Activated CD4-positive, alpha-beta T cell treated with anti-CD3 and anti-CD28 coated beads for 36 hours (primary cell): ENCODE measurements at regions of chr10 and their contacts with region 1.

Region 1: GRCh38 chr10:47311932-47312662 is 10.2 kb upstream of the GDF2 start:
- DNase-seq: peak; percentile 93
- ATAC-seq: peak; percentile 96
- H3K4me3 Mint-ChIP-seq: no peak overlapping the region
- H3K27ac Mint-ChIP-seq: peak overlapping the region; percentile 58
- H3K4me1 Mint-ChIP-seq: peaks cover 22% of the 10 kb centered on the region
- H3K27me3 Mint-ChIP-seq: no peaks in the 10 kb centered on the region

Region 2: GRCh38 chr10:47024399-47025252 is 287.5 kb before region 1 on chr10:
- CTCF ChIA-PET with region 1: interaction called, 45 read pairs
- POLR2A ChIA-PET with region 1: no interaction called
- intact Hi-C with region 1: loop called (anchors 1 kb)
- DNase-seq: peak; percentile 84
- ATAC-seq: peak; percentile 97
- H3K4me3 Mint-ChIP-seq: no peak overlapping the region
- H3K27ac Mint-ChIP-seq: no peak overlapping the region
- H3K4me1 Mint-ChIP-seq: peaks cover 5% of the 10 kb centered on the region
- H3K27me3 Mint-ChIP-seq: peaks cover 6% of the 10 kb centered on the region

Region 3: DNA sequence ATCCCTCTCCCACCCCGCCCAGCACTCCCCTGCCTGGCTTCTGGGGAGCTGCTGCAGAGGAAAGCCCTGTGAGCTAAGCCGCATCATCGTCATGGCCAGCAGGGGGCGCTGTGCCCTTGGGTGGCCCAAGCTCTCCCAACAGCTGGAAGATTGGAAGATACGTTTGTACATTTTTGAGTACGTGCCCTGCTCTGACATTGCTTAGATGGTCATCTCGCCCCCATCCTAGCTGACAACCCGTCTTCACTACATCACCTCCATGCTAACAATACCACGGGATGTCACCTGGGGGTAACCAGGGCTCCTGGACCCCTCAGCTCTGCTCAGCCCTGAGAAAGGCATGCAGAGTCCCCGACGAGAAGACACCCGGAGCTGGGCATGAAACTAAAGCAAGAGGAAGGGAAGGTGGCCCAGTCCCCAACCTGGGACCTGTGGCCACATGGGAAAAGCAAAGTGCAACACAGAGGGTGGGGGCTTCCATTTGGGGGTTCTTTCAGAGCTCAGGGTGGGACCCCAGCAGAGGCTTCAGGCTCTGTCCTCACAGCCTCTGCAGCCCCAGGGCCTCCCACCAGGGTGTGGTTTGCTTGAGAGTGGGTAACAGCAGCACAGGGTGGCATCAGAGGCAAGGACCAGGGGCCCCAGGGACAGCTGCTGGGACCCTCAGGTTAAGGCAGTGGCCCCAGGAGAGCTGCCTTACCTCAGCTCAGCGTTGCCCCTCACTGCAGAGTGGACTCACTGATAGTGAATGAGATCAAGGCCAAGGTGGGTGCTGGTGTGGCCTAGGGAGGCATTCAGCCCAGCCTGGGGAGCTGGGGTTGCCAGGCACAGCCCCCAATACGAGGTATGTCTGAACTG is 264.2 kb before region 1 on chr10:
- CTCF ChIA-PET with region 1: interaction called, 150 read pairs
- POLR2A ChIA-PET with region 1: interaction called, 7 read pairs
- intact Hi-C with region 1: loop called (anchors 1 kb)
- DNase-seq: peak; percentile 90
- ATAC-seq: peak; percentile 86
- H3K4me3 Mint-ChIP-seq: no peak overlapping the region
- H3K27ac Mint-ChIP-seq: no peak overlapping the region
- H3K4me1 Mint-ChIP-seq: peaks cover 14% of the 10 kb centered on the region
- H3K27me3 Mint-ChIP-seq: no peaks in the 10 kb centered on the region

Region 4: GRCh38 chr10:47233631-47234030 is 78.5 kb before region 1 on chr10:
- CTCF ChIA-PET with region 1: interaction called, 3 read pairs
- POLR2A ChIA-PET with region 1: no interaction called
- intact Hi-C with region 1: loop called in 1 of 2 experiments (anchors 2 kb)
- DNase-seq: no peak
- ATAC-seq: no peak
- H3K4me3 Mint-ChIP-seq: no peak overlapping the region
- H3K27ac Mint-ChIP-seq: no peak overlapping the region
- H3K4me1 Mint-ChIP-seq: peaks cover 4% of the 10 kb centered on the region
- H3K27me3 Mint-ChIP-seq: no peaks in the 10 kb centered on the region

Region 5: GRCh38 chr10:47296156-47296894 is 15.8 kb before region 1 on chr10:
- CTCF ChIA-PET with region 1: interaction called, 11 read pairs
- POLR2A ChIA-PET with region 1: no interaction called
- intact Hi-C with region 1: no loop called
- DNase-seq: no peak
- ATAC-seq: no peak
- H3K4me3 Mint-ChIP-seq: no peak overlapping the region
- H3K27ac Mint-ChIP-seq: no peak overlapping the region
- H3K4me1 Mint-ChIP-seq: peaks cover 10% of the 10 kb centered on the region
- H3K27me3 Mint-ChIP-seq: peaks cover 8% of the 10 kb centered on the region